ENCODE measurements at regions of chr6 and their contacts with region 1.

Region 1: GRCh38 chr6:144215932-144216667 is 65.8 kb downstream of the STX11 start:
- DNase-seq: peak; percentile 93 to 96
- ATAC-seq: peak; percentile 93 to 97 (median 95)
- H3K4me3 ChIP-seq: peak overlapping the region; percentile 23 to 73 (median 68)
- H3K27ac ChIP-seq: peak overlapping the region; percentile 87 to 97 (median 94)
- H3K4me1 ChIP-seq: peaks cover 0 to 31% (median 17%) of the 10 kb centered on the region in 9 donors
- H3K27me3 ChIP-seq: no peaks in the 10 kb centered on the region
- CTCF ChIP-seq: peak; percentile 56 to 75 (median 66)

Region 2: GRCh38 chr6:144095331-144096002 is 120.6 kb before region 1 on chr6 and contains the start of gene SF3B5:
- intact Hi-C with region 1: loop called in 1 of 10 experiments (anchors 2 kb)
- DNase-seq: peak; percentile 96 to 99
- ATAC-seq: peak; percentile 99 to 100 (median 100)
- H3K4me3 ChIP-seq: peak within 1 kb of the TSS; percentile 48 to 98 (median 84)
- H3K27ac ChIP-seq: peak within 1 kb of the TSS; percentile 59 to 92 (median 86)
- H3K4me1 ChIP-seq: peaks cover 6 to 27% (median 17%) of the 10 kb centered on the region in 9 donors
- H3K27me3 ChIP-seq: no peaks in the 10 kb centered on the region
- CTCF ChIP-seq: peak in 1 of 9 donors; percentile 12
- total RNA-seq, gene SF3B5: 107 to 158 (median 120) TPM

Region 3: DNA sequence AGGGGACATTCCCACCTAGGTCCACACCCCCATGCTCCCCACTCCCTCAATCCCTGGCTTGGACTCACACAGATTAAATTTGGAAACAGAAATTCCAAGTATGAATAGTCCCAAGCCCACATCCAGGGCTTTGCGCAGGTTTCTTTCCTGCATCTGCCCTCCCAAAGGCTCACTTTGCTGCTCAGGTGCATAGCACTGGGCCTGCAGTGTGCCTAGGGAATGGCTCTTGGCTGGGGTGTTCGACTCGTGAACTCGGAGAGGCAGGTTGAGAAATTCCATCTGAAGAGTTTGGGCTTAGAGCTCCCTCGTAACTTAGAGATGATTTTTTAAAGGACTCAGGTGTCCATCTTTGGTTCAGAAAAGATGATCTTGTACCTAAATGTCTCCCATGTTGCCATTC is 105.9 kb before region 1 on chr6:
- intact Hi-C with region 1: loop called (anchors 1 to 5 kb)
- DNase-seq: no peak
- ATAC-seq: no peak
- H3K4me3 ChIP-seq: no peak overlapping the region
- H3K27ac ChIP-seq: no peak overlapping the region
- H3K4me1 ChIP-seq: peaks cover 0 to 2% (median 0%) of the 10 kb centered on the region in 9 donors
- H3K27me3 ChIP-seq: no peaks in the 10 kb centered on the region
- CTCF ChIP-seq: no peak

Region 4: DNA sequence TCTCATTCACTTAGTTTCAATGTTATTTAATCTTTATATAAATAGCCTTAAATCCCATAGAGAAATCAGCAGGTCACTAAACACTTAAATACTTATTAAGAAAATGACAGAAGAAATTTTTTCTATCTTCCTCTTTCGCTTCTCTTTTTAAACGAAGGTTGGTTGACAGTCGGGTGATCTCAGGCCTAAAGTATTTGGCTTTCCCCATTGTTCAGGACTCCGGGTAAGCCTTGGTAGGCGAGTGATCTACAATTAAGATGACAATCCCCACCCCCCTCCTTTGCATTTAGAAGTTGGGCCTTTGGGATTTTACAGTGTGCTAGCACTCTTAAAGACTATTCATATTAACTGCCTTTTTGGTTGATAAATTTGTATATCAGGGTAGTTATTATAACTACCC is 49.3 kb after region 1 on chr6:
- intact Hi-C with region 1: loop called in 3 of 10 experiments (anchors 1 to 5 kb)
- DNase-seq: peak in 1 of 2 donors; percentile 29
- ATAC-seq: peak; percentile 34 to 75 (median 49)
- H3K4me3 ChIP-seq: no peak overlapping the region
- H3K27ac ChIP-seq: peak overlapping the region; percentile 19 to 91 (median 72)
- H3K4me1 ChIP-seq: peaks cover 7 to 35% (median 26%) of the 10 kb centered on the region in 9 donors
- H3K27me3 ChIP-seq: no peaks in the 10 kb centered on the region
- CTCF ChIP-seq: no peak

Region 5: DNA sequence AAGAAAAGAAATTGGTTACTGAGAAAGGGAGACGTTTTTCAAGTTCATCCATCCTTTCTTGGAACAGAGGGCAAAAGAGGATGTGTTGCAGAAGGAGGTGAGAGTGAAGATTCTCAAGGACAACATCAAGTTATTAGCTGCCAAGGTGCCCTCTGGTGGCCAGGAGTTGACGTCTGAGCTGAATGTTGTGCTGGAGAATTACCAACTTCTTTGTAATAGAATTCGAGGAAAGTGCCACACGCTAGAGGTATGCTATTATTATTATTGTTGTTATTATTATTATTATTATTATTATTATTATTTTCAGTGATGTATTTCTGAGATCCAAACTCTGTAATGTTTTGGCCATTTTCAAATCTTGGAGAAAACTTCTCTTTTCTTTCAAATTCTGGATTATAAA is 266.0 kb after region 1 on chr6:
- intact Hi-C with region 1: loop called in 6 of 10 experiments (anchors 2 to 5 kb)
- DNase-seq: peak; percentile 67 to 72
- ATAC-seq: peak in 3 of 8 donors; percentile 42 to 58 (median 56)
- H3K4me3 ChIP-seq: no peak overlapping the region
- H3K27ac ChIP-seq: peak overlapping the region in 2 of 10 donors; percentile 1 to 10
- H3K4me1 ChIP-seq: peaks cover 0 to 39% (median 22%) of the 10 kb centered on the region in 9 donors
- H3K27me3 ChIP-seq: no peaks in the 10 kb centered on the region
- CTCF ChIP-seq: peak in 8 of 9 donors; percentile 30 to 82 (median 74)

Measured in heart right ventricle (tissue), 16 donors.